MCF 10A (cell line): ENCODE measurements at regions of chr13 and their contacts with region 1.

Region 1: GRCh38 chr13:30395192-30396084 is 26.9 kb upstream of the UBE2L5 start:
- DNase-seq: peak; percentile 94
- H3K4me3 Mint-ChIP-seq: peak overlapping the region; percentile 80
- H3K27ac Mint-ChIP-seq: peak overlapping the region; percentile 93
- H3K4me1 Mint-ChIP-seq: peaks cover 10% of the 10 kb centered on the region
- H3K27me3 Mint-ChIP-seq: no peaks in the 10 kb centered on the region
- CTCF ChIP-seq: no peak

Region 2: DNA sequence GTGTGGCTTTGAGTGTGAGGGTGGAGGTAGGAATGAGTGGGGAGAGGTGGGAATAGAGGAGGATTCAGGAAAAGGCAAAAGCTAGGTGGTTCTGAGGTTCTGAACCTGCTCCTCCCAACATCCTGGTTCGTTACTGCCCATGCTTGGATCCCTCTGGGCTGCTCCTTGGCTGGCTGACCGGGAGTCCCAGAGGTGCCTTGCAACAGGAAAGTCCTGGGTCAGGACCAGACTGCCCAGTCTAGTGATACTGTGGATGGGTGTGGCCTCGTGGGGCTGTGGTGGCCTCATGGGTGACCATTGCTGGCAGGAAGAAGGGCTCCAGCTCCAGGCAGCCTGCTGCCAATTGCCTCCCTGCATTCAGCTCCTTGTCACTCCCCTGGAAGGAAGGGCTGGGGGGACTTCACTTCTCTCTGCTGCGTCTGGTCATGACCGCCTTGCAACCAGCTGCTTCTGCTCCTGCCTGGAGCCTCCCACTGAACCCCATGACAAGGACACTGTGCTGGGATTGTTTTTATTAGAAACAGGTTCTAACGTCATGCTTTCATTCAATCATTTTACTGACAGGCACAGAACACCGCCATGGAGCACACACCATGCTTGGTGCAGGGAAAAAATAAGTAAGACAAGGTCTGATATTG is 483.5 kb before region 1 on chr13:
- CTCF ChIA-PET with region 1: no interaction called
- POLR2A ChIA-PET with region 1: no interaction called
- intact Hi-C with region 1: no loop called
- DNase-seq: no peak
- H3K4me3 Mint-ChIP-seq: no peak overlapping the region
- H3K27ac Mint-ChIP-seq: no peak overlapping the region
- H3K4me1 Mint-ChIP-seq: peaks cover 45% of the 10 kb centered on the region
- H3K27me3 Mint-ChIP-seq: no peaks in the 10 kb centered on the region
- CTCF ChIP-seq: no peak

Region 3: DNA sequence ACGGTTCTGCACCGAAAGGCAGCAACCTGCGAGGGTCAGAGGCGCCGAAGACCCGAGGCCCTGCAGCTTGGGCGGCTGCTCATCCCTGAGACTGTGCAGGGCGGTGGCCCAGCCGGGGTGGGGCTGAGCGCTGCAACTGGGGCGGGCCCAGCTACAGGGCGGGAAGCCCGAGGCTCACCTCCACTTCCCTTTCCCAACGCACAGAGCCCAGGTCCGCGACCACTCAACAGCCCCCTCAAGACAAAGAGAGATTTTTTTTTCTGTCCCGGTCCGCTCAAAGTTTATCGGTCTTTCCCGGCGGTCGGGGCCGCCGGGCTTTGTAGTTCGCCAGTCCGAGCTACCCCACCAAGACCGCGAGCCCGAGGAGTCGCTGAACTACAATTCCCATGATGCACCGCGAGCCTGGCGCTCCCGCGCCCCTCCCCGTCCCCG is 88.7 kb before region 1 on chr13:
- CTCF ChIA-PET with region 1: interaction called, 6 read pairs
- POLR2A ChIA-PET with region 1: interaction called, 37 read pairs
- intact Hi-C with region 1: no loop called
- DNase-seq: peak; percentile 88
- H3K4me3 Mint-ChIP-seq: peak overlapping the region; percentile 78
- H3K27ac Mint-ChIP-seq: no peak overlapping the region
- H3K4me1 Mint-ChIP-seq: peaks cover 43% of the 10 kb centered on the region
- H3K27me3 Mint-ChIP-seq: no peaks in the 10 kb centered on the region
- CTCF ChIP-seq: no peak

Region 4: DNA sequence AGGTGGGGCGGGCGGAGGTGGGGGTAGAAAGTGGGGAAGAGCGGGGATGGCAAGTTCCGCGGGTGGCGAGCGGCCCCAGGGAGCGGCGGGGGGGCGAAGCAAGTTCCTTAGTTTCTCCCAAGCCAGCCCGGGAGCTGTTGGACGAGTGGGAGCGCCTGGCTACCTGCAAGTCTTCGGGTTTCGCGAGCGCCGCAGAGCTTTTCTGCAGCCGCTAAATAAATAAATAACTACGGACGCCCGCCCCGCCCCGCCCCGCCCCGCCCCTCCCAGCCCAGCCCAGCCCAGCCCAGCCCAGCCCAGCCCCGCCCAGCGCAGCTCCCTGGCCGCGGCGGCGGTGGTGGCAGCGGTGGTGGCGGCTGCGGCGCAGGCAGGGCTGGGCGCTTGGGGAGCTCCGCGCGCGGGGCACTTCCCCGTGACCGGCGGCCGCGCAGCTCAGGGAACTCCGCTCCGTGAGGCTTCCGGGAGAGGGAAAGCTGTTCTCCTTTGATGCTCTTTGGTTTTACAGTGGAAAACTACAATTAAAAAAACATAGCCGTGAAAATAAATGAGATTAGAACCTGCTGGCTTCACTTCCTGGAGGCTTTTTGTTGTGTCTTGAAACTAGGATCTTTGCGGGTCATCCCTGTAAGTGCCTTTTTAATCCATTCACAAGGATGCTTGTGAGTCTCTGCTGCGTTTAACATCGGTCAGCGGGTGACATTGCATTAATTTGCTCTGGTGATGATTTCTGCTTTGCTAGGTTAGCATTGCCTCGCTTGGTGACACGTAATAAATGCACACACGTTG is 26.8 kb after region 1 on chr13 and contains the start of gene UBE2L5:
- CTCF ChIA-PET with region 1: interaction called, 3 read pairs
- POLR2A ChIA-PET with region 1: interaction called, 49 read pairs
- intact Hi-C with region 1: no loop called
- DNase-seq: peak; percentile 76
- H3K4me3 Mint-ChIP-seq: peak within 1 kb of the TSS; percentile 73
- H3K27ac Mint-ChIP-seq: peak within 1 kb of the TSS; percentile 47
- H3K4me1 Mint-ChIP-seq: peaks cover 7% of the 10 kb centered on the region
- H3K27me3 Mint-ChIP-seq: no peaks in the 10 kb centered on the region
- CTCF ChIP-seq: no peak
- total RNA-seq, gene UBE2L5: not detected in 2 replicates

Region 5: GRCh38 chr13:30429721-30430694 is 34.6 kb after region 1 on chr13:
- CTCF ChIA-PET with region 1: no interaction called
- POLR2A ChIA-PET with region 1: interaction called, 54 read pairs
- intact Hi-C with region 1: no loop called
- DNase-seq: peak; percentile 89
- H3K4me3 Mint-ChIP-seq: peak overlapping the region; percentile 32
- H3K27ac Mint-ChIP-seq: peak overlapping the region; percentile 57
- H3K4me1 Mint-ChIP-seq: peaks cover 13% of the 10 kb centered on the region
- H3K27me3 Mint-ChIP-seq: no peaks in the 10 kb centered on the region
- CTCF ChIP-seq: no peak